ENCODE measurements at regions of chr11 and their contacts with region 1.

Region 1: DNA sequence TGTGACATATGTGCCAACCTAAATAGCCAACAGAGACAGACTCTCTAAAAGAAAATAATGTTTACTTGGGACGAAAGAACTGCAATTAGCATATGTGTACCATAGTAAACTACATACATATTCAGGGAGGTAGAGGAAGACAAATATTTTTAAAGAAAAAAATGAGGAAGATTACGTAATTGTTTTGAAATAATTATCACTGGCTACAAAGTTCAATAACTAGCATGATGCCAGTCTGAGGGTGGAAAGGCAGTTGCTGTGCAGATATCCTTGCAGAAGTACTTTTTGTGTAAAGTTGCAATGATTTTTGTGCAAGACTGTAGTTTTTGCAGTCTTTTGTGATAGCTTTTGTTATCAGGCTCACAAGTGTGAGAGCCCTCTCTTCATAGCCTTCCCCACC is 103.3 kb upstream of the ANO5 start:
- DNase-seq: no peak
- H3K4me3 ChIP-seq: no peak overlapping the region
- H3K27ac ChIP-seq: no peak overlapping the region
- H3K4me1 ChIP-seq: no peaks in the 10 kb centered on the region
- H3K27me3 ChIP-seq: no peaks in the 10 kb centered on the region
- CTCF ChIP-seq: no peak

Region 2: GRCh38 chr11:20639688-20640087 is 1449.9 kb before region 1 on chr11:
- CTCF ChIA-PET with region 1: interaction called, 11 read pairs
- POLR2A ChIA-PET with region 1: no interaction called
- intact Hi-C with region 1: no loop called
- DNase-seq: no peak
- H3K4me3 ChIP-seq: no peak overlapping the region
- H3K27ac ChIP-seq: no peak overlapping the region
- H3K4me1 ChIP-seq: no peaks in the 10 kb centered on the region
- H3K27me3 ChIP-seq: peaks cover 51% of the 10 kb centered on the region
- CTCF ChIP-seq: no peak

Region 3: GRCh38 chr11:21909152-21909551 is 180.5 kb before region 1 on chr11:
- CTCF ChIA-PET with region 1: no interaction called
- POLR2A ChIA-PET with region 1: no interaction called
- intact Hi-C with region 1: no loop called
- DNase-seq: peak in 1 of 2 experiments; percentile 35
- H3K4me3 ChIP-seq: no peak overlapping the region
- H3K27ac ChIP-seq: no peak overlapping the region
- H3K4me1 ChIP-seq: peaks cover 13% of the 10 kb centered on the region; the same call in 1 of the 2 replicates
- H3K27me3 ChIP-seq: no peaks in the 10 kb centered on the region
- CTCF ChIP-seq: no peak

Region 4: GRCh38 chr11:22049276-22049675 is 40.3 kb before region 1 on chr11:
- CTCF ChIA-PET with region 1: no interaction called
- POLR2A ChIA-PET with region 1: no interaction called
- intact Hi-C with region 1: loop called (anchors 2 kb)
- DNase-seq: no peak
- H3K4me3 ChIP-seq: no peak overlapping the region
- H3K27ac ChIP-seq: no peak overlapping the region
- H3K4me1 ChIP-seq: no peaks in the 10 kb centered on the region
- H3K27me3 ChIP-seq: 0 out of 2 replicates have a peak, but pooled peaks cover 6% of the 10 kb centered on the region
- CTCF ChIP-seq: no peak